Sigmoid colon (tissue), 7 donors: ENCODE measurements at regions of chr3 and their contacts with region 1.

Region 1: DNA sequence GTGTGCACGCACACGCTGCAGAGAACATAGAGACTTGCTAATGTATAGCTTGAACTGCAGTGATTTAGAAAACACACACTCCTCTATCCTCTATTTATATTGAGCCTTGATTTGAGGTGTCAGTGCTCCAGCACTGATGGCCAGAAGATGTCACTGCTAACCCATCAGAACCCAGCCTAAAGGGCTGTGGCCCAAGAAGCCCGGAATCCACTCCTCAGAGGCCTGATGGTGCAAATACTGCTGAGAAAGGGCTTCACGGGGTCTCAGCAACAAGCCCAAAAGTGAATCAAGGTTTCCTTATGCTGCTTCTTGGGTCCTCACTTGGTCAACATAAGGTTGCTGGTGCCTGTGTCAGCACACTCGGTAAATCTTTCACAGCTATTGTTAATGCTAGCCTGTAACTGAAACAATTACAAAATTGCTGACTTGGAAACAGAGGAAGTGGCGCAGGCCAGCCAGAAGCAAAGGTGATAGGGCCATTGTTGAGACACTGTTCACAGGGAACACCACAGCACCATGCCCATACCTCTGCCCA is 60.3 kb downstream of the HEG1 start:
- DNase-seq: peak; percentile 86
- H3K4me3 ChIP-seq: no peak overlapping the region
- H3K27ac ChIP-seq: peak overlapping the region; percentile 59 to 84 (median 76)
- H3K4me1 ChIP-seq: peaks cover 0 to 73% (median 44%) of the 10 kb centered on the region in 4 donors
- H3K27me3 ChIP-seq: no peaks in the 10 kb centered on the region
- CTCF ChIP-seq: peak; percentile 47 to 74 (median 63)
- EP300 ChIP-seq: no peak
- POLR2A ChIP-seq: no peak

Region 2: DNA sequence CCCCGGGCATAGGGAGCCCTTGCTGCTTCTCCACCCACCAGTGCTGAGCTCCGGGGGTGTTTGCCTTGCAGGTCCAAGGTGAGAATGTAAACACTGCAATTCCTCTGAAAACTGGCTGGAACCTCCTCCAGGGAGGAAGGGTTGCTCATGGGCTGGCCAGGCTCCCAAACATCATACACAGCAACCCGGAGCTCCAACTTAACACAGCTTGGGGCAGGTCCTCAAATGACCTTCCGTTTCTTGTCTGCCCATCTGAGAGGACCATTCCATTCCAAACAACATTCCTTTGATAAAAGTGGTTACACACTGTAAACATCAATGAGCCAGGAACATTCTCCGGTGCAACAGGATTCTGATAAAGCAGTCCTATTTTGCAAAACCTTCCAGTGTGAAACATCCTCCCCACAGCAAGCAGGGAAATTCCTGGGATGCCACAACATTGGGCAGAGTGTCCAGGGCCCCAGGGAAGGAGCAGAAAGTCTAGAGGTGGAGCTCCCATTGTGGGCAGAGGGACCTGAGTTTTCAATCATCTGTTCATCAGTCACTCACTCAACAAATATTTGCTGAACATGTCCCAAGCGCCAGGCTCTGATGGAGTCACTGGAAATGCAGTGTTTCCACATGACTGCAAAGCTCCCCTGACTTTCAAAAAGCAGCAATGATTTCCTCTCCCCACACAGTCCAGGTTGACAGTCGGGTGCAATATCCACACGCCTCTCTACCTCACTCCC is 67.5 kb after region 1 on chr3:
- intact Hi-C with region 1: loop called (anchors 2 kb)
- DNase-seq: no peak
- H3K4me3 ChIP-seq: no peak overlapping the region
- H3K27ac ChIP-seq: peak overlapping the region; percentile 78 to 95 (median 80)
- H3K4me1 ChIP-seq: peaks cover 0 to 42% (median 41%) of the 10 kb centered on the region in 4 donors
- H3K27me3 ChIP-seq: no peaks in the 10 kb centered on the region
- CTCF ChIP-seq: no peak
- EP300 ChIP-seq: no peak
- POLR2A ChIP-seq: no peak

Region 3: GRCh38 chr3:125141596-125142419 is 146.3 kb after region 1 on chr3:
- intact Hi-C with region 1: loop called (anchors 5 kb)
- DNase-seq: peak; percentile 84
- H3K4me3 ChIP-seq: peak overlapping the region; percentile 28 to 54 (median 43)
- H3K27ac ChIP-seq: peak overlapping the region; percentile 46 to 65 (median 58)
- H3K4me1 ChIP-seq: peaks cover 0 to 33% (median 21%) of the 10 kb centered on the region in 4 donors
- H3K27me3 ChIP-seq: no peaks in the 10 kb centered on the region
- CTCF ChIP-seq: peak in 2 of 4 experiments; percentile 52
- EP300 ChIP-seq: no peak
- POLR2A ChIP-seq: no peak

Region 4: GRCh38 chr3:125165189-125165947 is 169.8 kb after region 1 on chr3:
- intact Hi-C with region 1: loop called (anchors 5 kb)
- DNase-seq: no peak
- H3K4me3 ChIP-seq: no peak overlapping the region
- H3K27ac ChIP-seq: no peak overlapping the region
- H3K4me1 ChIP-seq: peaks cover 0 to 16% (median 0%) of the 10 kb centered on the region in 4 donors
- H3K27me3 ChIP-seq: no peaks in the 10 kb centered on the region
- CTCF ChIP-seq: peak in 3 of 4 experiments; percentile 34 to 45 (median 37)
- EP300 ChIP-seq: no peak
- POLR2A ChIP-seq: no peak

Region 5: DNA sequence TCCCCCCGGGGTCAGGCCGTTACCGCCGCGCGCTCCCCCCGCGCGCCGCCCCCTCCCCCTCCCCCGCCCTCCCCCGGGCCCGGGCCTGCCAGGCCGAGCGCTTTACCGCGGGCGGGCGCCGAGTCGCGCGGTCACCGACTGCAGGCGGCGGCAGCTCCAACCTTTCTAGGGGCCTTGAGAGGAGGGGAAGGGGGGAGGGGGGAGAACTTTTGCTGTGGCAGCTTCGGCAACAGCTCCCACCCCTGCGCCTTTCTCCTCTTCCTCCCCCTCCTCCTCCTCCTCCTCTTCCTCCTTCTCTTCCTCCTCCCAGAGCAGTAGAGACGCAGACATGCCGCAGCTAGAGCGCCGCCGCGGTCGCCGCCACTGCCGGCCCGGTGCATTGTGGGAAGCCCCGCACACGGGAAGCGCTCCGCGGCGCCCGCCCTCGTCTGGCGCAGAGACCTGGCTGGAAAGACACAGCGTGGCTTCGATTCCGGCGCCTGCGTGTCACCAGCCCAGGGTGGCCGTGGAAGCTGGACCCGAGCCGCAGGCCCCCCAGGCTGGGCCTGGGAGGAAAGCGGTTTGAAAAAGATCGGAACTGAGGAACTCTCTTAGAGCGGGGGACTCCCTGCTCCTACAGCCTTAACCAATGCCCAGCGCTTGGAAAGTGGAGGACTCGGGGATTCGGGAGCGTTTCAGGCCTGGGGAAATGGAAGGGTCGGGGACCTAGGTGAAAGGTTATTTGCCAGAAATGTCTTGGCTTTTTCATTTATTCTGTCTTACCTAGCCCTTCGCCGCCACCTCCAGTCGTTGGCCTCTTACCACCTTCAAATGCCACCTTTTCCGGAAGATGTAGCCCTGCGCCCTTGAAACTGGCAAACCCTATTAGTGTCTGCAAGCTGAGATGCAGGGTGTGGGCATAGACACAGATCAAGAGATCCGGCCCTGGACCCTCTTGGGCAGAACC is 379.7 kb after region 1 on chr3 and contains the start of gene ZNF148:
- intact Hi-C with region 1: loop called (anchors 2 kb)
- DNase-seq: peak; percentile 93
- H3K4me3 ChIP-seq: peak within 1 kb of the TSS; percentile 81 to 98 (median 86)
- H3K27ac ChIP-seq: peak within 1 kb of the TSS; percentile 90 to 94 (median 92)
- H3K4me1 ChIP-seq: peaks cover 0 to 31% (median 19%) of the 10 kb centered on the region in 4 donors
- H3K27me3 ChIP-seq: no peaks in the 10 kb centered on the region
- CTCF ChIP-seq: no peak
- EP300 ChIP-seq: peak in 1 of 4 donors; percentile 48
- POLR2A ChIP-seq: peak; percentile 78 to 79
- total RNA-seq, gene ZNF148: 28.2 to 42.5 (median 35.4) TPM

Region 6: DNA sequence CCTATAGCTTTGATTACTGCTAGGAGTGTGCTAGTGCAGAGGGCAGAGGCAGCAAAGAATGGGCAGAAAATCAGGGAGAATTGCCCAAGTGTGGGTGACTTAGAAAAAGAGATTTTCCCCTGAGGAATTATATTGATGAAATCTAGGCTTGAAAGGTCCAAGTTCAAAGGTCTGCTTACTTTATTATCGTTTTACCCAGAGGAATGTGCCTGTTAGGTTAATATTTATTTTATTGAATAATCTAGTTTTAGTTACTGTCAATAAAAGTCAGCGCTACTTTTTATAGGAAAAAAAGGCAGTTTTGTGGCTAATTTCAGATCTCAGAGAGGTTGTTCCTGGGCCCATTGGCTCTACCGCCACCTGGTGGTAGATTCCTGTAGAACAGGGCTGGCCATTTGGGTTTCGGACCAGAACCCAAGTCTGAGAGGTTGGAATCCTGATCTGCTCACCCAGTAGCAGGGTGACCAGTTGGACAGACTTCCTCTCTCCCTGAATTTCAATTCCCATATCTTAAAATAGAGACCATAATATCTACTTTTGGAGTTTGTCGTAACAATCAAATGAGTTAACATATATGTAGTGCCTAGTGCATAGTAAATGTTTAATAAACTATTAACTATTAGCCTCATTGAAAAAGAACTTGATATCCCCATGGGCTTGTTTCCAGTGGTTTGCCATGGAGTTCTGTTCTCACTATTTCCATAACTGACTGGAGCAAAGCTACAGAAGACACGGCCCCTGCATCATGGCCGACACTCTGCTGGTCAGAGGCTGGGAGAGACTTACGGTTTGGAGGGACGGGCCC is 442.3 kb after region 1 on chr3:
- intact Hi-C with region 1: loop called (anchors 1 kb)
- DNase-seq: peak; percentile 71
- H3K4me3 ChIP-seq: no peak overlapping the region
- H3K27ac ChIP-seq: no peak overlapping the region
- H3K4me1 ChIP-seq: no peaks in the 10 kb centered on the region
- H3K27me3 ChIP-seq: no peaks in the 10 kb centered on the region
- CTCF ChIP-seq: peak; percentile 60 to 95 (median 89)
- EP300 ChIP-seq: no peak
- POLR2A ChIP-seq: no peak

Region 7: DNA sequence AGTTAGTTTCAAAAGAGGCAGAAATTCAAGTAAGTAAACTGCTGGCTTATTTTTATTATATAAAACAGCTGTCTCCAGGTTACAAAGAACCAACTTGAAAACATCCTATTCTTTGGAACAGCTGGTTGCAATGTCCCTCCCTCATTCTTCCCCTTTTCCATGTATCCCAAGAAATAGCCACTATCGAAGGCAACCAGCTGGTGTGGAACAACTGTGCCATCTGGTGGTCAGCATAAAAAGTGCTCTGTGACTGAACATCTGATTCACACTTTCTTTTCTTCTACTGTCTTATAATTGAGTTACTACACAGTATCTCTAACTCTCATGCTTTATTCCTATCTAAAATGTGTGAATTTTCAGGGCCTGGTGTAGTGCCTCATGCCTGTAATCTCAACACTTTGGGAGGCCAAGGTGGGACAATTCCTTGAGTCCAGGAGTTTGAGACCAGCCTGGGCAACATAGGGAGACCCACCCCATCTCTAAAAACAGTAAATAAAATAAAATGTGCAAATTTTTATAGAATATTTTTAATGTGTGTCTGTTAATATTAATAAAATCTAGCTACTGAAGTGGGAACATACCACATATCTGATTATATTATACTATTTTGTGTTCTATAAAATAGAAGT is 590.2 kb after region 1 on chr3:
- intact Hi-C with region 1: loop called (anchors 10 kb)
- DNase-seq: peak; percentile 79
- H3K4me3 ChIP-seq: no peak overlapping the region
- H3K27ac ChIP-seq: peak overlapping the region in 1 of 4 donors; percentile 14
- H3K4me1 ChIP-seq: peaks cover 0 to 41% (median 18%) of the 10 kb centered on the region in 4 donors
- H3K27me3 ChIP-seq: no peaks in the 10 kb centered on the region
- CTCF ChIP-seq: peak; percentile 57 to 85 (median 82)
- EP300 ChIP-seq: no peak
- POLR2A ChIP-seq: no peak